ENCODE measurements at regions of chr1 and their contacts with region 1.

Region 1: GRCh38 chr1:201530741-201531531 is 8.0 kb upstream of the NAV1 start:
- DNase-seq: peak; percentile 53 to 67
- ATAC-seq: peak; percentile 69 to 75
- H3K4me3 ChIP-seq: no peak overlapping the region
- H3K27ac ChIP-seq: peak overlapping the region; percentile 44 to 57 (median 50)
- H3K4me1 ChIP-seq: peaks cover 12 to 17% of the 10 kb centered on the region in 2 donors
- H3K27me3 ChIP-seq: no peaks in the 10 kb centered on the region
- CTCF ChIP-seq: peak; percentile 36 to 74 (median 69)
- POLR2A ChIP-seq: no peak

Region 2: GRCh38 chr1:201703621-201704439 is 172.9 kb after region 1 on chr1:
- in situ Hi-C with region 1: no loop called
- intact Hi-C with region 1: loop called (anchors 1 kb)
- DNase-seq: peak; percentile 67 to 70
- ATAC-seq: peak; percentile 75 to 82
- H3K4me3 ChIP-seq: no peak overlapping the region
- H3K27ac ChIP-seq: peak overlapping the region; percentile 19 to 56 (median 38)
- H3K4me1 ChIP-seq: peaks cover 20 to 21% of the 10 kb centered on the region in 2 donors
- H3K27me3 ChIP-seq: no peaks in the 10 kb centered on the region
- CTCF ChIP-seq: peak; percentile 87 to 98 (median 96)
- POLR2A ChIP-seq: no peak

Region 3: GRCh38 chr1:201792534-201793305 is 261.8 kb after region 1 on chr1:
- in situ Hi-C with region 1: no loop called
- intact Hi-C with region 1: loop called (anchors 5 kb)
- DNase-seq: peak; percentile 52 to 73
- ATAC-seq: peak; percentile 93 to 94
- H3K4me3 ChIP-seq: no peak overlapping the region
- H3K27ac ChIP-seq: peak overlapping the region; percentile 49 to 73 (median 66)
- H3K4me1 ChIP-seq: peaks cover 30 to 38% of the 10 kb centered on the region in 2 donors
- H3K27me3 ChIP-seq: no peaks in the 10 kb centered on the region
- CTCF ChIP-seq: peak; percentile 93 to 97 (median 95)
- POLR2A ChIP-seq: no peak

Region 4: DNA sequence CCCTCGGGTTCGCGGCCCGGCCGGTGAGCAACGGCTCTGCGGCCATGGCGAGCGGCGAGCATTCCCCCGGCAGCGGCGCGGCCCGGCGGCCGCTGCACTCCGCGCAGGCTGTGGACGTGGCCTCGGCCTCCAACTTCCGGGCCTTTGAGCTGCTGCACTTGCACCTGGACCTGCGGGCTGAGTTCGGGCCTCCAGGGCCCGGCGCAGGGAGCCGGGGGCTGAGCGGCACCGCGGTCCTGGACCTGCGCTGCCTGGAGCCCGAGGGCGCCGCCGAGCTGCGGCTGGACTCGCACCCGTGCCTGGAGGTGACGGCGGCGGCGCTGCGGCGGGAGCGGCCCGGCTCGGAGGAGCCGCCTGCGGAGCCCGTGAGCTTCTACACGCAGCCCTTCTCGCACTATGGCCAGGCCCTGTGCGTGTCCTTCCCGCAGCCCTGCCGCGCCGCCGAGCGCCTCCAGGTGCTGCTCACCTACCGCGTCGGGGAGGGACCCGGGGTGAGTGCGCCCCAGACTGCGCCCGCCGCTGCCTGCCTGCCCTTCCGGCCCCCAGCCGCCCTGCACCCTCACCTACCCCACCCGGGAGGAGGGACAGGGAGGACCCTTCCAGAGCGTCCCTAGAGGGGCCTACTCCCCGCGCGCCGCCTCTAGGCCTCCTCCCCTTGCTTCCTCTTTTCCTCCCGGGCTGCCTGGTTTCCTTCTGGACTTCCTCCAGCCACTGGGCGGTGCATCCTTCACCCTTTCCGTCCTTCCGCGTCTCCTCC is 451.9 kb after region 1 on chr1 and contains the start of gene RNPEP:
- in situ Hi-C with region 1: no loop called
- intact Hi-C with region 1: loop called (anchors 10 kb)
- DNase-seq: peak; percentile 40 to 69
- ATAC-seq: peak; percentile 83
- H3K4me3 ChIP-seq: peak within 1 kb of the TSS; percentile 78 to 95 (median 86)
- H3K27ac ChIP-seq: peak within 1 kb of the TSS; percentile 75 to 90 (median 82)
- H3K4me1 ChIP-seq: peaks cover 5 to 11% of the 10 kb centered on the region in 2 donors
- H3K27me3 ChIP-seq: no peaks in the 10 kb centered on the region
- CTCF ChIP-seq: peak in 1 of 5 experiments; percentile 22
- POLR2A ChIP-seq: peak; percentile 68 to 71
- total RNA-seq, gene RNPEP: 11.1 to 24.9 (median 21.2) TPM

Measured in gastrocnemius medialis (tissue), 4 donors.